ENCODE measurements at regions of chr16 and their contacts with region 1.

Region 1: DNA sequence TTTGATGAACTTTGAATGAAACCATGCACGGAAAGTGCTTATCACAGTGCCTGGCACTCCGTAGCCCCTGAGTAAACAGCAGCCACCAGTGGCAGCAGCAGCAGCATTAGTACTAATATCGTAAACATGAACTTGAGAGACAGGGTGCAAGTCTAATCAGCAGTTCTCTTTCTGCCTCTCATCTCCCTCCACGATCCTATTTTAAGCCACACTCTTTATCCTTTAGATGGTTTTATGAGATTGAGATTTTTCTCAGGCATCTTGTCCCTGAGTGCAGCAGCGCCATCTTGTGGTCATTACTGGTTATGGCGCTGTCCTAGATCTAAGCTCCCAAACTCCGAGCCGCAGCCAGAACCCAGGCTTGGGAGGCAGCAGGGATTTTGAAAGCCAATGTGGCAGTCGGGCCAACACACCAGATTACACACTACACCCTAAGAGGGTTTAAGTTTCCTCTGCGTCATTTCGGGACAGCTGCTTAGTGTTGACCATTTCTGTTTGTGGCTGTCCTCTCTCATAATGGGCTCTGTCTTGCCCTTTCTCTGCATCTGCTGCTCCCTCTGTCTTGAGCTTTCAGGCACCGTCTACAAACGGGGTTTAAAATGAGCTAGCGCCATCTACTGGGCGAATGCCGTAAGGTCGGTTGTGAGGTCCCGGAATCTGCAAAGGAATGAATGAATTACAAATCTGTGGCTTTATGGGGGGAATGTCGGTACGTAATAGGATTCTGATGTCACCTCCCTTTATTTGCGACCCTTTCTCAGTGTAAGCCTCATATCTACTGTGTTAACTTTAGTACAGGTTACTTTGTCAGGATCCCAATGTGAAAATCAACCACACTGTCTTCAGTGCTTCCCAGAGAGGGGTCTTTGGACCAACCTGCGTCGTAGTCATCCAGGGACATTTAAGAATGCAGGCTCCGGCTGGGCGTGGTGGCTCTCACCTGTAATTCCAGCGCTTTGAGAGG is 64.5 kb downstream of the CYLD start:
- DNase-seq: peak; percentile 91
- ATAC-seq: peak; percentile 94
- H3K4me3 Mint-ChIP-seq: peak overlapping the region; percentile 56
- H3K27ac Mint-ChIP-seq: peak overlapping the region; percentile 55
- H3K4me1 Mint-ChIP-seq: peaks cover 12% of the 10 kb centered on the region
- H3K27me3 Mint-ChIP-seq: no peaks in the 10 kb centered on the region

Region 2: DNA sequence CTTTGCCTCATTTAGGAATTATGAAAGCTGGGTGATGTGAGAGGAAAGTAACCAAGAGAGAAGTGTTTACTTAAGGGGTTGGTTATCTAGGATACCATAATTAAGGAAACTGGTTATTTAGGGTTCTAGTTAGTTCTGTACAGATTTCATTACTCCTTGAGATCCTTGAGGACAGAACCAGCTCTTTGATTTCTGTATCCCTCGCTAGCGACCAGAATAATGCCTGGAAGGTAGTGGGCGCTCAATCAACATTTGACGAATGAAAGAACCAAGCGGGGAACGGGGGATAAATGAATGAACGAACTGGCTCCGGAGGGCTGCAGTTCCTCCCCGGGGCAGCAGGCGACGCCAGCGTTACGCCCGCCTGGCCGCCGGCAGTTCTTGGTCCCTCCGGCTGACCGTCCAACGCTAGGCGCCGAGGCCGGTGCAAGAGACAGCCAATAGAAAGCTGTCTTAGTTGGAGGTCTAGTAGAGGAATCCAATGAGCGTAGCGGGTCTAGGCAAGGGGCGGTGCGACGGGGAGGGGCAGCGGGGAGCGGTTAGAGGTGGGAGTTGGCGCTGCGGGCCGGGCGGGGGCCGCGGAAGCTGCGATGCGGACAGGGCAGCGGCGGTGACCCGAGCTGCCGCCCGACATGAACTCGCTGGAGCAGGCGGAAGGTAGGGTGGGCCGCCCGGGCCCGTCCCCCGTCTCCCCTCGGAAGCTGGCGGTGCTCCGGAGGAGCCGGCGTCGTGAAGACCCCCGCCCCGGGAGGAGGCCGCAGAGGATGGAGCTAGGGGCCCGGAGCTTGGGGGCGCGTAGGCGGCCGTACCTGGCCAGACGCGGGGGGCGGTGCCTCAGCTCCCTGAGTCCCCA is 781.5 kb before region 1 on chr16 and contains the start of gene CNEP1R1:
- CTCF ChIA-PET with region 1: interaction called, 10 read pairs
- POLR2A ChIA-PET with region 1: no interaction called
- intact Hi-C with region 1: loop called in 1 of 2 experiments (anchors 1 kb)
- DNase-seq: peak; percentile 95
- ATAC-seq: peak; percentile 97
- H3K4me3 Mint-ChIP-seq: peak within 1 kb of the TSS; percentile 96
- H3K27ac Mint-ChIP-seq: peak within 1 kb of the TSS; percentile 85
- H3K4me1 Mint-ChIP-seq: peaks cover 23% of the 10 kb centered on the region
- H3K27me3 Mint-ChIP-seq: no peaks in the 10 kb centered on the region
- total RNA-seq, gene CNEP1R1: 19.3 to 22.8 TPM

Region 3: DNA sequence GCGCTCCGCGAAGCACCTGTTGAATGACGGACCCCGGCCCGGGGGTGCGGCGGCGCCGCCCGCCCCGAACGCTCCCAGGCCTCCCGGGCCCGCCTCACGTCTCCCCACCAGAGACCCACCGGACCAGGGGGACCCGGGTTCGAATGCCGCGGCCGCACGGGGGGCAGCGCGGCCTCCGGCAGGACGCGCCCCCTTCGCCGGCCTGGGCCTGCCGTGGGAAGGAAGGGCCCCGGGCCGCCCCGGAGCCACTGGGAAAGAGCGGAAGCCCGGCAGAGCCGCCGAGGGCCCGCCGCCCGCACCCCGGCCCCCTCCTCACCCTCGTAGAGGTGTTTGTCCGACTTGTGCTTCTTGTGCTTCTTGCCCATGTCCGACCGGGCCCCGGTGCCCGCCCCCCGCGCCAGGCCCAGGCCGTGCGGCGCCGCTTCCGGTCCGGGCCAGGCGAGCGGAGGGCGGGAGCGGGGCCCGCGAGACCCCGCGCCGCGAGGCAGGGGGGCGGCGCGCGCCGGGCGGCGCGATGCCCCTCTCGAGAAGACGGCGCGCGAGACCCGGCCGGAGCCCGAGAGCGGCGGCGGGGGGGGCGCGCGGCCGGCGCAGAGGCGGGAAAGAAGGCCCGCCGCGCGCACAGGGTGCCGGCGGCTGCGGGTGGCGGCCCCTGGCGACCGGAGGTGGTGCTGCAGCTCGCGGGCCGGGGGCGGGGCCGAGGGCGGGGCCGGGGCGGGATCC is 437.8 kb before region 1 on chr16 and contains the start of gene BRD7:
- CTCF ChIA-PET with region 1: interaction called, 9 read pairs
- POLR2A ChIA-PET with region 1: no interaction called
- intact Hi-C with region 1: loop called (anchors 1 to 5 kb)
- DNase-seq: peak; percentile 82
- ATAC-seq: peak; percentile 73
- H3K4me3 Mint-ChIP-seq: peak within 1 kb of the TSS; percentile 89
- H3K27ac Mint-ChIP-seq: peak within 1 kb of the TSS; percentile 86
- H3K4me1 Mint-ChIP-seq: peaks cover 41% of the 10 kb centered on the region
- H3K27me3 Mint-ChIP-seq: no peaks in the 10 kb centered on the region
- total RNA-seq, gene BRD7: 87.7 to 104 TPM

Region 4: GRCh38 chr16:50627419-50627818 is 179.0 kb before region 1 on chr16:
- CTCF ChIA-PET with region 1: interaction called, 14 read pairs
- POLR2A ChIA-PET with region 1: no interaction called
- intact Hi-C with region 1: no loop called
- DNase-seq: peak; percentile 72
- ATAC-seq: peak; percentile 86
- H3K4me3 Mint-ChIP-seq: no peak overlapping the region
- H3K27ac Mint-ChIP-seq: peak overlapping the region; percentile 68
- H3K4me1 Mint-ChIP-seq: peaks cover 40% of the 10 kb centered on the region
- H3K27me3 Mint-ChIP-seq: no peaks in the 10 kb centered on the region

Region 5: DNA sequence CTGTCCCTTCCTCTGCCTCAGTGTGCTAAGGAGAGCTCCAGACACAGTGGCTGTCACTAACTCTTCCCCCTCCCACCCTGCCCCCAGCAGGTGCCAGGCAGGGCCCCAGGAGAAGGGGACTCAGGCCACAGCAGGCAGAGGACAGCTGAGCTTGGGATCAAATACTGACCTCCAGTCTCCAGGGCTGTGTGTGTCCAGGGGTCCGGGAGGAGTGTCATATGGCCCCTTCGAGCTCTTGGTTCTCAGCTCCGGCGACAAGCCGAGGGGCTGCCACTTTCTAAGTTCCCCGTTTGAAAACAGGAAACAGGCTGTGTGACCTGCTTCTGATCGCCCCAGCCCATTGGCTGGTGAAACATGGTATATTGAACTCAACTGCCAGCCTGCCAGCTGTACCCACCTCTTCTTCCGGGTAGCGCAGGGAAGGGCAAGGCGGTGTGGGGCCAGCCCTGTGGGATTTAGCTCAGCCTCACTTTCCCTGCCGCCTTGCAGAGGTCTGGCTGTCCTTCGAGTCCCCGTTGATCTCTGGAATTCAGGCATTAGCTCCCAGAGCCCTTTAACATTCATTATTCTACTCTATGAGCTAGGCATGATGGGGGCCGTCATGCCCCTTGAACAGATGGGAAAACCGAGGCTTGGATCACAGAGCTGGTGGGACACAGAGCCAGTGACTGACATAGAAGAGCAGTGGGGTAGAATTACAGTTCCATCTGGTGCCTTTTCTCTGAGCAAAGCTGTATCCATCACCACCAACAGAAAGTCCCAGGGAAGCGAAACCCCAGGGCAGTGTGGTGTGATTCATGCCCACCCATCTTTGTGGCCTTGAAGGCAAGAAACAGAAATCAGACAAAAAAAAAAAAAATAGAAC is 125.1 kb before region 1 on chr16 and contains the start of gene SNX20:
- CTCF ChIA-PET with region 1: interaction called, 12 read pairs
- POLR2A ChIA-PET with region 1: no interaction called
- intact Hi-C with region 1: no loop called
- DNase-seq: peak; percentile 80
- ATAC-seq: peak; percentile 69
- H3K4me3 Mint-ChIP-seq: peak within 1 kb of the TSS; percentile 78
- H3K27ac Mint-ChIP-seq: peak within 1 kb of the TSS; percentile 94
- H3K4me1 Mint-ChIP-seq: peaks cover 85% of the 10 kb centered on the region
- H3K27me3 Mint-ChIP-seq: no peaks in the 10 kb centered on the region
- total RNA-seq, gene SNX20: 43.3 to 48.9 TPM

Region 6: GRCh38 chr16:50756473-50756872 is 49.9 kb before region 1 on chr16:
- CTCF ChIA-PET with region 1: interaction called, 38 read pairs
- POLR2A ChIA-PET with region 1: no interaction called
- intact Hi-C with region 1: no loop called
- DNase-seq: no peak
- ATAC-seq: no peak
- H3K4me3 Mint-ChIP-seq: no peak overlapping the region
- H3K27ac Mint-ChIP-seq: peak overlapping the region; percentile 55
- H3K4me1 Mint-ChIP-seq: peaks cover 71% of the 10 kb centered on the region
- H3K27me3 Mint-ChIP-seq: no peaks in the 10 kb centered on the region

Region 7: DNA sequence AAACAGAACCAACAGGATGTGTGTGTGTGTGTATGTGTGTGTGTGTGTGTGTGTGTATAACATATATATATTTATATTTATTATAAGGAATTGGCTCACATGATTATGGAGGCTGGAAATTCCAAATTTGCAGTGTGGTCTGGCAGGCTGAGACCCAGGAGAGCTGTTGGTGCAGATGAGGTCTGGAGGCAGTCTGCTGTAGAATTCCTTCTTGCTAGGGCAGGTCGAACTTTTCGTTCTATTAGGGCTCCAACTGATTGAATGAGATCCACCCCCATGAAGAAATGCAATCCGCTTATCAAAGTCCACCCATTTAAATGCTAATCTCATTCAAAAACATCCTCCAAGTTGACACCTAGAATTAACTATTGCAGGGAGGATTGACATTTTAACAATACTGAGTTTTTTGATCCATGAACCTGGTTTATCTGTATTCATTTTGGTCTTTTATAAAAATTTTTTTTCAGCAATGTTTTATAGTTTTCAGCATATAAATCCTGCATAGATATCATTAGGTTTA is 20.5 kb after region 1 on chr16:
- CTCF ChIA-PET with region 1: interaction called, 10 read pairs
- POLR2A ChIA-PET with region 1: no interaction called
- intact Hi-C with region 1: no loop called
- DNase-seq: no peak
- ATAC-seq: no peak
- H3K4me3 Mint-ChIP-seq: no peak overlapping the region
- H3K27ac Mint-ChIP-seq: no peak overlapping the region
- H3K4me1 Mint-ChIP-seq: no peaks in the 10 kb centered on the region
- H3K27me3 Mint-ChIP-seq: peaks cover 17% of the 10 kb centered on the region

Measured in activated CD4-positive, alpha-beta T cell treated with anti-CD3 and anti-CD28 coated beads for 36 hours (primary cell).